Mammary epithelial cell (primary cell): ENCODE measurements at regions of chr19 and their contacts with region 1.

Region 1: GRCh38 chr19:42455621-42456081 is 12.9 kb upstream of the CXCL17 start:
- DNase-seq: peak; percentile 96
- H3K4me3 ChIP-seq: no peak overlapping the region
- H3K27ac ChIP-seq: no peak overlapping the region
- H3K4me1 ChIP-seq: peaks cover 15% of the 10 kb centered on the region
- H3K27me3 ChIP-seq: no peaks in the 10 kb centered on the region
- CTCF ChIP-seq: no peak

Region 2: DNA sequence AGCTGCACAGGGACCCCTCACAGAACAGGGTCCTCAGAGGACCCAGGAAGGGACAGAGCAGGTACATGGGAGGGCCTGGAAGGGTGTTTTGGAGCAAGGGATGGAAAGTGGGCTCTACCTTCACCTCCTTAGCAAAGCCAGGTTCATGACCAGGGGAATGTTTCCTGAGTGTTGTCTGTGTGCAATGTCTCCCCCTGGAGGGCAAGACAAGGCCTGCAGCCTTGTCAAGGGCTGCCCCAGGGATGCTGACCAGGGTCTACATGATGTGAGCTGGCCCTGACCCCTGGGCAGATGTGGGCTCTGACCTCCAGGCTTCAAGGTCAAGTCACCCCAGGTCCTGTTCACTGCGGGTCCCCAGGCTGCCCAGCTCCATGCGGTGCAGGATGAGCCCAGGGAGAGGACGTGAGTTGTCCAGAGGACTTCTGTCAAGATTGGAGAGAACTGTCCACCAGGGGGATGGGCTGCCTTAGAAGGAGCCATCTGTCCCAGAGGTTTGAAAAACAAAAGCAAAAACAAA is 73.7 kb after region 1 on chr19:
- CTCF ChIA-PET with region 1: no interaction called
- dilution Hi-C with region 1: no loop called
- in situ Hi-C with region 1: loop called in 1 of 2 experiments (anchors 5 kb)
- intact Hi-C with region 1: loop called (anchors 1 kb)
- DNase-seq: peak; percentile 44
- H3K4me3 ChIP-seq: no peak overlapping the region
- H3K27ac ChIP-seq: no peak overlapping the region
- H3K4me1 ChIP-seq: peaks cover 21% of the 10 kb centered on the region
- H3K27me3 ChIP-seq: no peaks in the 10 kb centered on the region
- CTCF ChIP-seq: peak; percentile 92 to 97